Aorta (tissue), 5 donors: ENCODE measurements at regions of chr2 and their contacts with region 1.

Region 1: GRCh38 chr2:84022810-84023431 is 436.2 kb downstream of the SUCLG1 start:
- DNase-seq: no peak
- ATAC-seq: no peak
- H3K4me3 ChIP-seq: no peak overlapping the region
- H3K27ac ChIP-seq: no peak overlapping the region
- H3K4me1 ChIP-seq: no peaks in the 10 kb centered on the region
- H3K27me3 ChIP-seq: no peaks in the 10 kb centered on the region

Region 2: GRCh38 chr2:83967854-83968253 is 55.1 kb before region 1 on chr2:
- intact Hi-C with region 1: no loop called
- DNase-seq: no peak
- ATAC-seq: no peak
- H3K4me3 ChIP-seq: no peak overlapping the region
- H3K27ac ChIP-seq: no peak overlapping the region
- H3K4me1 ChIP-seq: no peaks in the 10 kb centered on the region
- H3K27me3 ChIP-seq: no peaks in the 10 kb centered on the region

Region 3: DNA sequence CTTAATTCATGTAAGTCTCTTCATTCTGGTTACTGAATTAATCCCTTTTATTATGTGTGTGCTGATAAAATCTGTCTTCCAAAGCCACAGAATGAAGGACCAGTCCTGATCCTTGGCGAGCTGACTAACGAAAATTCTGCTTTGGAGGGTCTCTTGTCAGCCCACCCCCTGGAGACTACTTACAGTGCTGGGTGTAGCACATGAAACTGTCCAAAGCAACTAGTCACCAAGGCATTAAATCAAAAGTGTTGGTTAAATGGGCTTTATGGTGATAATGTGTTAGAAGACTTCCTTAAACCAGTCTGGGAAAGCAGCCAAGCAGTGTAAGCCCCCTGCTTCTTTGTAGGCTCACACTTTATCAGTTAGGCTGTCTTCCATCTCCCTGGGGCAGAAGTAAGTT is 15.9 kb after region 1 on chr2:
- intact Hi-C with region 1: loop called in 1 of 2 experiments (anchors 2 kb)
- DNase-seq: no peak
- ATAC-seq: no peak
- H3K4me3 ChIP-seq: no peak overlapping the region
- H3K27ac ChIP-seq: no peak overlapping the region
- H3K4me1 ChIP-seq: no peaks in the 10 kb centered on the region
- H3K27me3 ChIP-seq: no peaks in the 10 kb centered on the region

Region 4: GRCh38 chr2:84132370-84132769 is 109.4 kb after region 1 on chr2:
- intact Hi-C with region 1: no loop called
- DNase-seq: no peak
- ATAC-seq: no peak
- H3K4me3 ChIP-seq: no peak overlapping the region
- H3K27ac ChIP-seq: no peak overlapping the region
- H3K4me1 ChIP-seq: no peaks in the 10 kb centered on the region
- H3K27me3 ChIP-seq: peaks cover 0 to 2% of the 10 kb centered on the region in 2 donors

Region 5: DNA sequence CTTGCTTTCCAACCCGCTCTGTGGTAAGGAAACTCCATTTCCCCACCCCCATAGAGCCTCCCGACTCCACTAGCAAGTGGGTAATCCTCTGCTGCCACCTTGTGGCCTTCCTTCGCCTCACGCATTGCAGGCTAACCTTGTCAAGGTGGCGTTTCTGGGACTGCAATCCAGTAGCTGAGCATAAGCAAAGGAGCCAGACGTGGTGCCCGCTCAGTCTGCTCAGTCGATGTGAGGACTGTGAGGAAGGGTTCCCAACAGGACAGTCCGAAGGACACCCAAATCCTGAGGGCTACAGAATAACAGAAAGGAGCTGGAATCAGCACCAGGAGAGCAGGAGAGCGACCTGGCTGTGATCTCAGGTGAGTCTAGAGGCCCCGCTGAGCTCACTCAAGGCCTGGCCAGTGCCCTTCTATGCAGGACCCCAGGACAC is 292.0 kb after region 1 on chr2:
- intact Hi-C with region 1: loop called in 1 of 2 experiments (anchors 10 kb)
- DNase-seq: peak; percentile 73 to 81
- ATAC-seq: no peak
- H3K4me3 ChIP-seq: no peak overlapping the region
- H3K27ac ChIP-seq: no peak overlapping the region
- H3K4me1 ChIP-seq: no peaks in the 10 kb centered on the region
- H3K27me3 ChIP-seq: no peaks in the 10 kb centered on the region